ENCODE measurements at regions of chr2 and their contacts with region 1.

Region 1: DNA sequence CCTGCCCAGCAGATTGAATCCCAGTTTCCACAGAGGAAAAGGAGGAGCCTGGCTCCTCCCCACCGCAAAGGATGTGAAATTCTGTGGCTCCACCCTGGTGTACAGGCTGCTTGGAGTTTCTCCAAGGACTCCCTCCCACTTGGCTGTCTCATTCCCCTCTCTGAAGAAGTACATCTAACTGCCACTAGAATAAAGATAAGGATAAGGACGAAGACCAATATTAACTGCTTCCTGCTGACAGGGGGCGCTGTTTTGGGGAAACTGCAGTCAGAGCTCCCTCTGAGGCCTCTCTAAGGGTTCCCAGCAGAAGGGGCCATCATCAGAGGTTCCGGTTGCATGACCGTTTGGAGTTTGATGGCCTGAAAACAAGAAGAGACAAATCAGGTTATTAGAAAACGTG is 790.9 kb downstream of the CPS1 start:
- DNase-seq: no peak
- H3K4me3 ChIP-seq: no peak overlapping the region
- H3K27ac ChIP-seq: no peak overlapping the region
- H3K4me1 ChIP-seq: no peaks in the 10 kb centered on the region
- H3K27me3 ChIP-seq: no peaks in the 10 kb centered on the region
- CTCF ChIP-seq: no peak
- POLR2A ChIP-seq: no peak

Region 2: GRCh38 chr2:211623096-211623495 is 275.8 kb after region 1 on chr2:
- intact Hi-C with region 1: loop called (anchors 5 kb)
- DNase-seq: no peak
- H3K4me3 ChIP-seq: no peak overlapping the region
- H3K27ac ChIP-seq: no peak overlapping the region
- H3K4me1 ChIP-seq: no peaks in the 10 kb centered on the region
- H3K27me3 ChIP-seq: no peaks in the 10 kb centered on the region
- CTCF ChIP-seq: no peak
- POLR2A ChIP-seq: no peak